ENCODE measurements at regions of chr12 and their contacts with region 1.

Region 1: GRCh38 chr12:74415633-74416032 is 122.0 kb upstream of the ATXN7L3B start:
- DNase-seq: peak; percentile 46
- H3K4me3 Mint-ChIP-seq: no peak overlapping the region
- H3K27ac Mint-ChIP-seq: no peak overlapping the region
- H3K4me1 Mint-ChIP-seq: peaks cover 7% of the 10 kb centered on the region
- H3K27me3 Mint-ChIP-seq: no peaks in the 10 kb centered on the region
- CTCF ChIP-seq: peak; percentile 54

Region 2: DNA sequence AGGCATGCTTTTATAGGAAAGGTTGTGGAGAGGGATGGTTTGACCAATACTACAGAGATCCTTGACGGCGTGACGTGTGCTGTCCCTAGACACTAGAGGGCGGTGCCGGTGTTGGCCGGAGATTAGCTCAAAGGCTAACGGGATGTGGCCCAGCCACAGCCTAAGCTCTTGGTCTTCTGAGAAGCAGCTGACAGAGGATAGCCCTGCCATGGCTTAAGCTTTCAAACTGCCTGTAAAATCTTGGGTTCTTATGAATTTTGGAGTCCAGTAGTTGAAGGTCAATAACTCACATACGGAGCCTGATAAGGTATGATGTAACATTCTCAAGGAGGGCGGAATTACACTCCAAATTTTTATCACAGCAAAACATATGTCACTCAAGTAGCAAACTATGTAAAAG is 393.7 kb before region 1 on chr12:
- CTCF ChIA-PET with region 1: interaction called, 14 read pairs
- POLR2A ChIA-PET with region 1: no interaction called
- intact Hi-C with region 1: loop called (anchors 1 kb)
- DNase-seq: peak; percentile 68
- H3K4me3 Mint-ChIP-seq: no peak overlapping the region
- H3K27ac Mint-ChIP-seq: no peak overlapping the region
- H3K4me1 Mint-ChIP-seq: no peaks in the 10 kb centered on the region
- H3K27me3 Mint-ChIP-seq: no peaks in the 10 kb centered on the region
- CTCF ChIP-seq: peak; percentile 56

Region 3: DNA sequence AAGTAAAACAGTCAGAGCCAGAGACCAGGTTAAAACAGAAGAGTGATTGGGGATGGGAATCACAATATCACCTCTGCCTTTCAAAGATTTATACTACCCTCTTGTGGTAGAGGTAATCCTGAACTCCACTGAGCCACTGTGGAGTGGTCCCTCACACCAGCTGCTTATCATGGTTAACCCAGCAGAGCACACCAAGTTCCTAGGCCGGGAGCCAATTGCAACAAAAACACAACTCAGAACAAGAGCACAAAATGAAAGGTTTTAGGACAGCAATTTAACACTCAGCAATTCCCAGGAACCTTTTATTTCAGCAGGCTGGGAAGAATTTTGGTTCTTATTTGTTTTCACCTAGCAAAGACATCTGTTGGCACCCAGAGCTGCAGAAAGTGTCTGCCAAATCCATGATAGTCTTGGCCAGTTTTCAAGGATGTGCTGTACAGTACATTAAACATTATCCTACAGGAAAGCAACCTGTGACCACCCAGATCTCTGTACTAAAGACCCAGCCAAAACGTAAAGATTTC is 98.5 kb before region 1 on chr12:
- CTCF ChIA-PET with region 1: interaction called, 6 read pairs
- POLR2A ChIA-PET with region 1: no interaction called
- intact Hi-C with region 1: loop called (anchors 2 kb)
- DNase-seq: peak; percentile 62
- H3K4me3 Mint-ChIP-seq: no peak overlapping the region
- H3K27ac Mint-ChIP-seq: no peak overlapping the region
- H3K4me1 Mint-ChIP-seq: peaks cover 14% of the 10 kb centered on the region
- H3K27me3 Mint-ChIP-seq: no peaks in the 10 kb centered on the region
- CTCF ChIP-seq: peak; percentile 52

Region 4: DNA sequence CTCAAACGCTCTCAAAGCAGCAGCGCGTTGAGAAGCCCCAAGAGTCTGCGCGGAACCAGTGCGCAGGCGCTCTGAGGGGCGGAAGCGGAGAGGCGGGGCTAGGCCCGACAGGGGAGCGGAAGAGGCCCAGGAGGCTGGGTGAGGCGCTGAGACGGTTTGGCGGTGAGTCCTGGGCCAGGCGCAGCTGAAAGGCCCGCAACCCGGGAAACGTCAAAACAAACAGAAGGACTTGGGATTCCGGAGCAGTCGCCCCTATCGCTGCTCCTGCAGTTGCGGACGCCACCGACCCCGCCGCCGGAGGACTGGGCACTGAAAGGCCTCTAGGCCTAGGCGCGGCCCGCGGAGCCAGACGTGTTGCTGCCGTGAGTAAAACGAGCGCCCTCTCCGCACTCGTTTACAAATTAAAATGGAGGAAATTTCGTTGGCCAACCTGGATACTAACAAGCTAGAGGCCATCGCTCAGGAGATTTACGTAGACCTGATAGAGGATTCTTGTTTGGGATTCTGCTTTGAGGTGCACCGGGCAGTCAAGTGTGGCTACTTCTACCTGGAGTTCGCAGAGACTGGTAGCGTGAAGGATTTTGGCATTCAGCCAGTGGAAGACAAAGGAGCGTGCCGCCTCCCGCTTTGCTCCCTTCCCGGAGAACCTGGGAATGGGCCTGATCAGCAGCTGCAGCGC is 122.2 kb after region 1 on chr12 and contains the start of gene ATXN7L3B:
- CTCF ChIA-PET with region 1: interaction called, 7 read pairs
- POLR2A ChIA-PET with region 1: no interaction called
- intact Hi-C with region 1: loop called (anchors 2 kb)
- DNase-seq: peak; percentile 95
- H3K4me3 Mint-ChIP-seq: peak within 1 kb of the TSS; percentile 97
- H3K27ac Mint-ChIP-seq: peak within 1 kb of the TSS; percentile 100
- H3K4me1 Mint-ChIP-seq: peaks cover 34% of the 10 kb centered on the region
- H3K27me3 Mint-ChIP-seq: no peaks in the 10 kb centered on the region
- CTCF ChIP-seq: no peak
- total RNA-seq, gene ATXN7L3B: 21.1 and 28.2 TPM in 2 replicates